Left lung (tissue), 14 donors: ENCODE measurements at regions of chr6 and their contacts with region 1.

Region 1: DNA sequence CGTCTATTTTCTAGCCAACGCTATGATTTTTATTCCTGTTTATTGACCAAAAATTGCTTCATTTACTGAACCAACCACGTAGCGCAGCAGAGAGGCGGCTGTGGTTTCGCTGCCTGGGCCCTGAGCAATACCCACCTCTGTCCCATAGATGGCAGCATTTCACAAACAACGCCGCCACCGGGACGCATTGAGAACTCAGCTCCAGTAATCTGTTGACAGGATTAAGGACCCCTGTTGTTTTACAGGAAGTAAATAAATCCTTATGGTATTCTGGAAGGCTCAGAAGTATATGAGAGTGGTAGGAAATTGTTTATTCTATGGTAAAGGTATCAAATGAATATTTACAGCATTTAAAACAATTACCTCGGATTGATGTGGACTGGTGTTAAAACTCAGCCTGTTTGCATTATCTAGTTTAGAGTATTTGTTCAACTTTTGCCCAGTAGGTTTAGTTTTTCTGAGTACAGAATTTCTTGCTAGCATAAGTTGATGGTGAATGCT is 547.9 kb upstream of the SLC35B3 start:
- DNase-seq: peak; percentile 45 to 80 (median 72)
- ATAC-seq: peak; percentile 98
- H3K4me3 ChIP-seq: no peak overlapping the region
- H3K27ac ChIP-seq: no peak overlapping the region
- H3K4me1 ChIP-seq: peaks cover 0 to 6% of the 10 kb centered on the region in 2 donors
- H3K27me3 ChIP-seq: peaks cover 0 to 10% of the 10 kb centered on the region in 2 donors
- CTCF ChIP-seq: peak; percentile 88 to 93

Region 2: GRCh38 chr6:9085054-9085708 is 101.9 kb after region 1 on chr6:
- intact Hi-C with region 1: no loop called
- DNase-seq: no peak
- ATAC-seq: no peak
- H3K4me3 ChIP-seq: no peak overlapping the region
- H3K27ac ChIP-seq: no peak overlapping the region
- H3K4me1 ChIP-seq: no peaks in the 10 kb centered on the region
- H3K27me3 ChIP-seq: no peaks in the 10 kb centered on the region
- CTCF ChIP-seq: no peak

Region 3: DNA sequence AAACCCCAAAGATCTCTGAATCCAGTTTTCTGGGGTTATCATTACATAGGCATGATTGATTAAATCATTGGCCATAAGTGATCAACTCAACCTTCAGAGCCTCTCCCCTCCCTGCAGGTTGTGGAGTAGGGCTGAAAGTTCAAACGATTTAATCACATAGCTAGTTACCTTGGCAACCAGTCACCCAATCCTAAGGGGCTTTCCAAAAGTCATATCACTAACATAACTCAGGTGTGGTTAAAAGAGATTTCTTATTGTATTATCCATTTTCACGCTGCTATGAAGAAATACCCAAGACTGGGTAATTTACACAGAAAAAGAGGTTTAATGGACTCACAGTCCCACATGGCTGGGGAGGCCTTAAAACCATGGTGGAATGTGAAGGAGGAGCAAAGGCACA is 387.2 kb after region 1 on chr6:
- intact Hi-C with region 1: no loop called
- DNase-seq: no peak
- ATAC-seq: no peak
- H3K4me3 ChIP-seq: no peak overlapping the region
- H3K27ac ChIP-seq: no peak overlapping the region
- H3K4me1 ChIP-seq: no peaks in the 10 kb centered on the region
- H3K27me3 ChIP-seq: no peaks in the 10 kb centered on the region
- CTCF ChIP-seq: no peak

Region 4: GRCh38 chr6:10429638-10430427 is 1446.6 kb after region 1 on chr6:
- intact Hi-C with region 1: loop called in 1 of 2 experiments (anchors 10 kb)
- DNase-seq: peak in 1 of 4 donors; percentile 48
- ATAC-seq: peak; percentile 76
- H3K4me3 ChIP-seq: no peak overlapping the region
- H3K27ac ChIP-seq: no peak overlapping the region
- H3K4me1 ChIP-seq: peaks cover 7 to 15% of the 10 kb centered on the region in 2 donors
- H3K27me3 ChIP-seq: peaks cover 28 to 84% of the 10 kb centered on the region in 2 donors
- CTCF ChIP-seq: peak; percentile 22 to 37